Posterior vena cava (tissue), 2 donors: ENCODE measurements at regions of chr2 and their contacts with region 1.

Region 1: GRCh38 chr2:30421604-30422443 is 25.2 kb upstream of the LCLAT1 start:
- DNase-seq: no peak

Region 2: GRCh38 chr2:30231212-30231995 is 190.4 kb before region 1 on chr2 and contains the start of gene LBH:
- intact Hi-C with region 1: loop called in 1 of 2 experiments (anchors 5 kb)
- DNase-seq: peak; percentile 95
- total RNA-seq, gene LBH: 104 to 280 TPM

Region 3: DNA sequence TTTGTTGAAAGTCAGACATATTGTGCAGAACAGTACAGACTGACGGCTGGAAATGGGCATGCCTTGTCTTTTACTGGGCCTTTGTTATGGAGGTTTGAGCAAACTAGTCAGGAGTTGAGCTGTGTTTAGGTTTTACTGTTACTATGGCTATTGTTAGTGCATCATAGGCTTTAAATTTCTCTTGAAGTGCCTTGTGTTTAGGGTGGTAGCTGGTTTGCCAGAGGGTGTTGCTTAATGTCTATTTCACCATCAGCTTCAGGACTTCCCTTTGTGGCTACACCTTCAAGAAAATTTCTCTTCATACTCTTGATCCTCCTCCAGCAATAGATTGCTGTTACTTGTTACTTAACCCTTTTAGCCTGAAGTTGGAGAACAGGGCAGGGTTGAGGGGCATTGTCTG is 280.9 kb after region 1 on chr2:
- intact Hi-C with region 1: loop called in 1 of 2 experiments (anchors 5 kb)
- DNase-seq: no peak